Natural killer cell (primary cell): ENCODE measurements at regions of chr7 and their contacts with region 1.

Region 1: DNA sequence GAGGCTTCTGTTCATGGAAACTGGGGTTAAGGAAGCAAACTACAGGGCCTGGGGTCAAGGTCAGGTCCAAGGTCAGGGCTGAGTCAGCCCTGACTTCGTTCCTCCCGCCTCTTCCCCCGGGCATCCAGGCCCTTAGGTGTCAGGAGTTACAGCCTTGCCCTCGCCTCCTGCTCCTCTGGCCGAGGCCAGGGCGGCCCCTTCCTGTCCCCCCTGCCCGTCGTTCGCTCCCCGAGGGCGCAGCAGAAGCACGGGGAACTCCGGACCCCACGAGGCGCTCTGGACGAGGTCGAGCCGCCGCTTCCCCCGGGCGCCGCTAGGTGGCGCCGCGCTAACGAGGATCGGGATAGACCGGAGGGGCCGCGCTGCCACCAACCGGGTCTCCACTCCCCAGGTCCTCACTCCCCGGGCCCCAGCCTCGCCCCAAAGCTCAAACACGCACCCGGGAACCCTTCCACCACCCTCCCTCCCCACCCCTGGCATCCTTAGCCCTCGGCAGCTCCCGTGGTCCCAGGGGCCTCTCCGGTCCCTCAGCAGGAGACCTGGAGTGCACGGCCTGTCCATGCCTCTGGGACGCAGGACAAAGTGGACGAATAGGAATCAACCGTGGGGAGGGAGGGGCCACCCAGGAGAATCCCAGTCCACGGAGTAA is 59.2 kb upstream of the MYL10 start:
- DNase-seq: peak; percentile 81 to 85
- ATAC-seq: peak; percentile 91 to 98 (median 94)
- H3K4me3 ChIP-seq: no peak overlapping the region
- H3K4me3 Mint-ChIP-seq: no peak overlapping the region
- H3K27ac ChIP-seq: no peak overlapping the region
- H3K27ac Mint-ChIP-seq: no peak overlapping the region
- H3K4me1 ChIP-seq: peaks cover 11% of the 10 kb centered on the region
- H3K4me1 Mint-ChIP-seq: peaks cover 0 to 4% of the 10 kb centered on the region in 2 donors
- H3K27me3 ChIP-seq: peaks cover 3% of the 10 kb centered on the region
- H3K27me3 Mint-ChIP-seq: peaks cover 6 to 14% of the 10 kb centered on the region in 2 donors
- CTCF ChIP-seq: peak; percentile 94

Region 2: DNA sequence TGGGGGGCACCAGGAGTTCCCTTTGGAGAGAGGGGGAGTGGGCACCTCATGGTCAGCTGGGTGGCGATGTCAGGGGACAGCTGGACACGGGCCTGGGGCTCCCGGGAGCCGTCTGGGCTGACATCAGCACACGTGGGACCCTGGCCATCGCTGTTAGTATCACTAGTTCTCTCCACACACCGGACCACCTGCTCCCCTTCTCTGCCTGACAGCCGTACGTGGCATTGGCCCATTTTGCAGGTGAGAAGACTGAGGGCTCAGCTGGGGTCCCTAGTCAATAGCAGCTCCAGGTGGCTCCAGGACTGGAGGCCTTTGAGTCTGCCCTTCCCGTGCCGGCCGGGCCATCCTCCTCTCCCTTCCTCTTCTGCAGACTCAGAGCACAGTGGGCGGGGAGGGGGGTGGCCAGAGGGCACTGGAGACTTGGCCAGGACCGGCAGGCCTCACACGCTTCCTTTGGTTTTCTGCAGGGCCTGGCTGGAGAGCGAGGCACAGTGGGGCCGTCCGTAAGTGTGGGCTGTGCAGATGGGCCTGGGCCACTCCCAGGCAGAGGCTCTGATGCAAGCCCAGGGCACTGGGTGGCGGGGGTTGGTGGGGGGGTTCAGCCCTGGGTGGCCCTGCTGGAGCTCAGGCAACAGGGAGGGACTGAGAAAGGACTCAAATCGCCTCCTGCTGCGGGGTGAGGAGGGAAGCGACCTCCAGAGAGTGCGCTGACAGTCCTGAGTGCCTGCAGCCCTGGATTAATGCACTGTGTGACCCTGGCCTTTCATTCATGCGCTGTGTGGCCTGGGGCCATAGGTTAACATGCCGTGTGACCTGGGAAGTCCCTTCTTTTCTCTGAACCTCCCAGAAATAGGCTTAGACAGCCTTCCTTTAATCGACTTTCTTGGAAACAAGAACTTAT is 137.4 kb before region 1 on chr7:
- intact Hi-C with region 1: no loop called
- DNase-seq: no peak
- ATAC-seq: no peak
- H3K4me3 ChIP-seq: no peak overlapping the region
- H3K4me3 Mint-ChIP-seq: no peak overlapping the region
- H3K27ac ChIP-seq: no peak overlapping the region
- H3K27ac Mint-ChIP-seq: no peak overlapping the region
- H3K4me1 ChIP-seq: no peaks in the 10 kb centered on the region
- H3K4me1 Mint-ChIP-seq: no peaks in the 10 kb centered on the region
- H3K27me3 ChIP-seq: no peaks in the 10 kb centered on the region
- H3K27me3 Mint-ChIP-seq: peaks cover 0 to 8% of the 10 kb centered on the region in 2 donors
- CTCF ChIP-seq: no peak

Region 3: DNA sequence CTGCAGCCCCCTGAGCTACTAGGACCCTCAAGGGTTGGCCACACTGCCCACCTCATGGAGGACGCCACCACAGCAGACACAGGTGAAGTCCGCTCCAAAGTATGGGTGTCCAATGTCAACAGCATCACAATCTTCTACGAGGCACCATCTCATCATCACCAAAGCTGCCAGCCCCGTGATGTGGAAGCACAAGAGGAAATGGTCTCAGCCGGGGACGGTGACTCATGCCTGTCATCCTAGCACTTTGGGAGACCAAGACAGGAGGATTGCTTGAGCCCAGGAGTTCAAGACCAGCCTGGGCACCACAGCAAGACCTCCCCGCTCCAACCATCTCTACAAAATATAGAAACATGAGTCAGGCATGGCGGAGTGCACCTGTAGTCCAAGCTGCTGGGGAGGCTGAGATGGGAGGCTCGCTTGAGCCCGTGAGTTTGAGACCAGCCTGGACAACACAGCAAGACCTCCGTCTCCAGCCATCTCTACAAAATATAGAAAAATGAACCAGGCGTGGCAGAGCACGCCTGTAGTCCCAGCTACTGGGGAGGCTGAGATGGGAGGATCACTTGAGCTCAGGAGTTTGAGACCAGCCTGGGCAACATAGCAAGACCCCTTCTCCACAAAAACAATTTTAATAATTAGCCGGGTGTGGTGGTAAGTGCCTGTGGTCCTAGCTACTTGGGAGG is 10.4 kb before region 1 on chr7:
- intact Hi-C with region 1: no loop called
- DNase-seq: no peak
- ATAC-seq: no peak
- H3K4me3 ChIP-seq: no peak overlapping the region
- H3K4me3 Mint-ChIP-seq: no peak overlapping the region
- H3K27ac ChIP-seq: no peak overlapping the region
- H3K27ac Mint-ChIP-seq: no peak overlapping the region
- H3K4me1 ChIP-seq: no peaks in the 10 kb centered on the region
- H3K4me1 Mint-ChIP-seq: no peaks in the 10 kb centered on the region
- H3K27me3 ChIP-seq: no peaks in the 10 kb centered on the region
- H3K27me3 Mint-ChIP-seq: no peaks in the 10 kb centered on the region
- CTCF ChIP-seq: no peak

Region 4: DNA sequence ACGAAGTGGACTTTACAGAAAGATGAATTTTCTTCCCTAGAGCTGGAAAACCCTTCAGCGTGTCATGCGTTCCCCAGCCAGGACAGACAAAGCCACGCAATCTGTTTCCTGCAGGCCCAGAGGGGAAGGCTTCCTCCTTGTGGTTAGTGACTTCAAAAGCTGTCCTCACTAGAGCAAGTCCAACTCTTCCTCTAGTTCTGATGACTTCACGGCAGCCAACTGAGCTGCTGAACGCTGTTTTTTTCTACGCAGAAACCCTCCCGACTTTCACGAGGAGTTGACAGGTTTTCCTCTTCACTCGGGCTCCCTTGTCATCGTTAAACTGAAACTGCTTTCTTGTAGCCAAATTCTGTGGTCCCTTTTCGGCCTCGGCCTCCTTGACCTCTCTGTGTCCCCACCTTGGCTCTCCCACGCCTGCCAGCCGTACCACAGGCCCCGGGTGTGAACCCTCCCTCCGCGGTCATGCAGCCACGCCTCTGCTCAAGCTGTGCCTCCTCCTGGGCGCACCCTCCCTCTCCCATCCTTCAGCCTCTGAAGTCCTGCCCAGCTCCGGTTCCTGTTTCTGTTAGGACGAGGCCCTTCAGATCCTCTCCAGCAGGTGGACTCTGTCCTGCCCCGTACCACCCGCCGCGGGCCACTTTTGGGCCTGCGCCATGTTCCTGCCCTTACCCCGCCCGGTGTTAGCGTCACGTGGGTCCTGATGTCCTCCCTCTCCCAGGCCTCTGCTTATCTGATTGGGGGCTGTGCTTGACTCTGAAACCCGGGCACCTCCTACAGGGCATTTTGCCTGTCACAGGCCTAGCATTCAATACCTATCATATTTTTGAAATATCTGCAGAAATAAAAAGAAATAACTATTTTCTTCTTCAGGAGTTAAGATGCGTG is 168.4 kb after region 1 on chr7:
- intact Hi-C with region 1: loop called (anchors 5 kb)
- DNase-seq: peak; percentile 79 to 88
- ATAC-seq: peak; percentile 89 to 94 (median 90)
- H3K4me3 ChIP-seq: peak overlapping the region; percentile 53
- H3K4me3 Mint-ChIP-seq: peak overlapping the region; percentile 94
- H3K27ac ChIP-seq: peak overlapping the region; percentile 94
- H3K27ac Mint-ChIP-seq: peak overlapping the region; percentile 94 to 99
- H3K4me1 ChIP-seq: peaks cover 33% of the 10 kb centered on the region
- H3K4me1 Mint-ChIP-seq: peaks cover 21 to 45% of the 10 kb centered on the region in 2 donors
- H3K27me3 ChIP-seq: no peaks in the 10 kb centered on the region
- H3K27me3 Mint-ChIP-seq: no peaks in the 10 kb centered on the region
- CTCF ChIP-seq: peak; percentile 46

Region 5: GRCh38 chr7:102236592-102237287 is 548.4 kb after region 1 on chr7:
- intact Hi-C with region 1: loop called (anchors 1 kb)
- DNase-seq: peak; percentile 29 to 59
- ATAC-seq: peak in 2 of 3 donors; percentile 42 to 44
- H3K4me3 ChIP-seq: no peak overlapping the region
- H3K4me3 Mint-ChIP-seq: no peak overlapping the region
- H3K27ac ChIP-seq: no peak overlapping the region
- H3K27ac Mint-ChIP-seq: no peak overlapping the region
- H3K4me1 ChIP-seq: no peaks in the 10 kb centered on the region
- H3K4me1 Mint-ChIP-seq: no peaks in the 10 kb centered on the region
- H3K27me3 ChIP-seq: no peaks in the 10 kb centered on the region
- H3K27me3 Mint-ChIP-seq: no peaks in the 10 kb centered on the region
- CTCF ChIP-seq: peak; percentile 63

Region 6: DNA sequence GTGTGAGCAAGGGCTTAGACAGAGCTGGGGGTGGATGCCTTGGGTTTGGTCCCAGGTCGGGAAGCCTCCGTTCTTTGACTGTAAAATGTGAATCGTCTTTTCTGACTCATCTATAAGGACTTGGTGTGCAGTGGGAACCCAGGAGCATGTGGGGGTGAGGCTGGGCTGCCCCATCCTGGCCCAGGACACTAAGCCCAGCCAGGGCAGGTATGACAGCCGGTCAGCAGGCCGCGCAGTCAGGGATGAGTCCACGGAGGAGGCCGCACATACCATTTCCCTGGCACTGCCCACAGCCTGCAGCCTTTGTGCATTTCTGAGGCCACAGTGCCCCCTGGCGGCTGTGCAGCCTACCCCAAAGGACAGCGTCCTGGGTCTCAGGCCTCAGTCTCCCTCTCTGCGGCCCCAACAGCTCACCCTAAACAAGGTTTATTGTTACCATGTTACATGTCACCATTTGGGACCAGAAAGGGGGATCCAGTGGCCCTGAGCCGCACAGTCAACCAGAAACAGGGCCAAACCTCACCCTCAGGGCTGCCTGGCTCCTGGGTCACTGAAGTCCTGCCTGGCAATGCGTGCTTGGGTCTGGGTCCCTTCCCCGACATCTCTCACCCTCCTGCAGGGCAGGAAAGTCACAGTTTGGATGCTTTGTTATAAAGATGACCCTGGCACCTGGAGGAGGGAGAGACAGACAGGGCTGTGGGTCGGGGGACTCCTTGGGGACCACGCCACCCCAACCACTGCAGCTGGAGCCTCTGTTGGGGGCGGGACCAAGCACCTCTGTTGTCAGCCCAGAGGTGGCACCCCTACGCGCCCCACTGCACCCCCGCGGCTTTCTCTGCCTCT is 584.0 kb after region 1 on chr7:
- intact Hi-C with region 1: loop called (anchors 1 kb)
- DNase-seq: peak; percentile 75 to 84
- ATAC-seq: peak; percentile 62 to 92 (median 73)
- H3K4me3 ChIP-seq: no peak overlapping the region
- H3K4me3 Mint-ChIP-seq: no peak overlapping the region
- H3K27ac ChIP-seq: no peak overlapping the region
- H3K27ac Mint-ChIP-seq: no peak overlapping the region
- H3K4me1 ChIP-seq: no peaks in the 10 kb centered on the region
- H3K4me1 Mint-ChIP-seq: peaks cover 0 to 5% of the 10 kb centered on the region in 2 donors
- H3K27me3 ChIP-seq: no peaks in the 10 kb centered on the region
- H3K27me3 Mint-ChIP-seq: no peaks in the 10 kb centered on the region
- CTCF ChIP-seq: peak; percentile 87